ENCODE measurements at regions of chr7 and their contacts with region 1.

Region 1: DNA sequence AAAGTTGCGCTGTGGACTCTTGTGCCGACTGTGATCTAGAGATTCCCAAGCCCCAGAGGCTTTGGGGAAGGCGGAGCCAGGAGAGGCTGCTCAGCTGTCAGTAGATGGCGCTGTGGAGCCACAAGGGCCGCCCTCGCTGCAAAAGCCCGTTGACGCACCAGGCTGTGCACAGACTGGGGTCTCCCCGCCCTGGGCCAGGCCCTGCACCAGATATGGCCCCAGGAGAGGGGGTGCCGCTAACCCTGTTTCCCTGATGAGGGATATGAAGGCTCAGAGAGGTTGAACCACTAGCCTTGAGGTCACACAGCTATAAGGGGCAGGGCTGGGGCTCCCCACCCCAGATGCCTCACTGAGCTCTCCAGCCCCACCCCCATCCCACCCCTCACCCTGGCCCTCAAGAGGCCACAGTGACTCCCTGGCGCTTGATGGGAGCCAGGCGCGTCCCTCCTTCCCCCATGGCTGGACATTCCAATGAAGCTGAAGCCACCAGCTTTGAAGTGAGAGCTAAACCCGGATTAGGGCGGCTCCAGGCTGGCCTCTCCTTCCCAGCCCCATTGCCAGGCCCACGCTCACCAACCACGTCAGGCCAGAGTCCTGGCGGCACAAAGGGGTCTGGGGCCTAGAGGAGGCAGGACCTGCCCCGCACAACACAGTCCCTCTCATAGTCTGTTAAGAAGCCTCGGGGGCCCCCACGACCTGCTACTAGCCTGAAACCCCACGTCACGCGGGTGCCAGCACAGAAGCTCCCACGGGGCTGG is 26.4 kb downstream of the MYL10 start:
- DNase-seq: peak; percentile 32 to 70 (median 60)
- ATAC-seq: peak; percentile 84
- H3K4me3 ChIP-seq: no peak overlapping the region
- H3K4me3 Mint-ChIP-seq: peak overlapping the region in 1 of 10 donors; percentile 23
- H3K27ac ChIP-seq: no peak overlapping the region
- H3K27ac Mint-ChIP-seq: no peak overlapping the region
- H3K4me1 ChIP-seq: no peaks in the 10 kb centered on the region
- H3K4me1 Mint-ChIP-seq: peaks cover 0 to 1% (median 0%) of the 10 kb centered on the region in 7 donors
- H3K27me3 ChIP-seq: no peaks in the 10 kb centered on the region
- H3K27me3 Mint-ChIP-seq: peaks cover 0 to 4% (median 0%) of the 10 kb centered on the region in 5 donors

Region 2: GRCh38 chr7:101792051-101792681 is 189.5 kb after region 1 on chr7:
- CTCF ChIA-PET with region 1: no interaction called
- POLR2A ChIA-PET with region 1: no interaction called
- intact Hi-C with region 1: no loop called
- DNase-seq: no peak
- ATAC-seq: no peak
- H3K4me3 ChIP-seq: no peak overlapping the region
- H3K4me3 Mint-ChIP-seq: no peak overlapping the region
- H3K27ac ChIP-seq: no peak overlapping the region
- H3K27ac Mint-ChIP-seq: no peak overlapping the region
- H3K4me1 ChIP-seq: no peaks in the 10 kb centered on the region
- H3K4me1 Mint-ChIP-seq: peaks cover 0 to 2% (median 0%) of the 10 kb centered on the region in 7 donors
- H3K27me3 ChIP-seq: no peaks in the 10 kb centered on the region
- H3K27me3 Mint-ChIP-seq: no peaks in the 10 kb centered on the region

Region 3: GRCh38 chr7:102236592-102237287 is 634.1 kb after region 1 on chr7:
- CTCF ChIA-PET with region 1: no interaction called
- POLR2A ChIA-PET with region 1: no interaction called
- intact Hi-C with region 1: loop called (anchors 1 kb)
- DNase-seq: peak in 8 of 9 donors; percentile 5 to 57 (median 32)
- ATAC-seq: peak; percentile 61
- H3K4me3 ChIP-seq: no peak overlapping the region
- H3K4me3 Mint-ChIP-seq: no peak overlapping the region
- H3K27ac ChIP-seq: no peak overlapping the region
- H3K27ac Mint-ChIP-seq: no peak overlapping the region
- H3K4me1 ChIP-seq: no peaks in the 10 kb centered on the region
- H3K4me1 Mint-ChIP-seq: peaks cover 0 to 4% (median 0%) of the 10 kb centered on the region in 7 donors
- H3K27me3 ChIP-seq: no peaks in the 10 kb centered on the region
- H3K27me3 Mint-ChIP-seq: no peaks in the 10 kb centered on the region

Region 4: GRCh38 chr7:102272075-102272917 is 669.6 kb after region 1 on chr7:
- CTCF ChIA-PET with region 1: interaction called, 3 read pairs
- POLR2A ChIA-PET with region 1: no interaction called
- intact Hi-C with region 1: loop called in 1 of 2 experiments (anchors 1 kb)
- DNase-seq: peak; percentile 34 to 78 (median 69)
- ATAC-seq: peak; percentile 83
- H3K4me3 ChIP-seq: no peak overlapping the region
- H3K4me3 Mint-ChIP-seq: no peak overlapping the region
- H3K27ac ChIP-seq: no peak overlapping the region
- H3K27ac Mint-ChIP-seq: no peak overlapping the region
- H3K4me1 ChIP-seq: no peaks in the 10 kb centered on the region
- H3K4me1 Mint-ChIP-seq: peaks cover 0 to 4% (median 0%) of the 10 kb centered on the region in 7 donors
- H3K27me3 ChIP-seq: no peaks in the 10 kb centered on the region
- H3K27me3 Mint-ChIP-seq: no peaks in the 10 kb centered on the region

Region 5: DNA sequence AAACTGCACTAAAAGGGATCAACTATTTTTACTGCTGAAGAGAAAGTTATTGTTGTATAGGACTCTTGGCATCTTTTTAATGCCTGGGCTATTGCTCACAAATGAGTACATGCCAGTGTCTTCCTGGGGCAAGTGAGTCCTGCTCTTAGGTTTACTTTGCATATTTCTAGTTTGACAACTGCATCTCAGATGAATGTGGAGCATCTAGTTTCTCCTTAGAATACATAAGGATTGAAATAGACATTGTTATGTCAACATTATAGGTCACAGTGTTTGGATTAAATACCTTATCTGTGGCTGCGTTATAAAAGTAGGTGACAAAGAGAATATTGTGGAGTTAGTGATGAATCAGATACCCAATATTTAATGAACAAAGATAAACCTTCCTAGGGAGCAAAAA is 1789.4 kb after region 1 on chr7:
- CTCF ChIA-PET with region 1: no interaction called
- POLR2A ChIA-PET with region 1: no interaction called
- intact Hi-C with region 1: no loop called
- DNase-seq: no peak
- ATAC-seq: no peak
- H3K4me3 ChIP-seq: no peak overlapping the region
- H3K4me3 Mint-ChIP-seq: no peak overlapping the region
- H3K27ac ChIP-seq: no peak overlapping the region
- H3K27ac Mint-ChIP-seq: no peak overlapping the region
- H3K4me1 ChIP-seq: no peaks in the 10 kb centered on the region
- H3K4me1 Mint-ChIP-seq: no peaks in the 10 kb centered on the region
- H3K27me3 ChIP-seq: no peaks in the 10 kb centered on the region
- H3K27me3 Mint-ChIP-seq: peaks cover 0 to 8% (median 6%) of the 10 kb centered on the region in 5 donors

Measured in naive thymus-derived CD4-positive, alpha-beta T cell (primary cell).